Left ventricle myocardium inferior (tissue), 1 donor: ENCODE measurements at regions of chr1 and their contacts with region 1.

Region 1: GRCh38 chr1:205485338-205486228 is 18.9 kb upstream of the CDK18 start:
- DNase-seq: no peak
- H3K4me3 ChIP-seq: no peak overlapping the region
- H3K27ac ChIP-seq: no peak overlapping the region
- H3K4me1 ChIP-seq: peaks cover 5% of the 10 kb centered on the region
- H3K27me3 ChIP-seq: peaks cover 50% of the 10 kb centered on the region
- CTCF ChIP-seq: peak; percentile 99

Region 2: DNA sequence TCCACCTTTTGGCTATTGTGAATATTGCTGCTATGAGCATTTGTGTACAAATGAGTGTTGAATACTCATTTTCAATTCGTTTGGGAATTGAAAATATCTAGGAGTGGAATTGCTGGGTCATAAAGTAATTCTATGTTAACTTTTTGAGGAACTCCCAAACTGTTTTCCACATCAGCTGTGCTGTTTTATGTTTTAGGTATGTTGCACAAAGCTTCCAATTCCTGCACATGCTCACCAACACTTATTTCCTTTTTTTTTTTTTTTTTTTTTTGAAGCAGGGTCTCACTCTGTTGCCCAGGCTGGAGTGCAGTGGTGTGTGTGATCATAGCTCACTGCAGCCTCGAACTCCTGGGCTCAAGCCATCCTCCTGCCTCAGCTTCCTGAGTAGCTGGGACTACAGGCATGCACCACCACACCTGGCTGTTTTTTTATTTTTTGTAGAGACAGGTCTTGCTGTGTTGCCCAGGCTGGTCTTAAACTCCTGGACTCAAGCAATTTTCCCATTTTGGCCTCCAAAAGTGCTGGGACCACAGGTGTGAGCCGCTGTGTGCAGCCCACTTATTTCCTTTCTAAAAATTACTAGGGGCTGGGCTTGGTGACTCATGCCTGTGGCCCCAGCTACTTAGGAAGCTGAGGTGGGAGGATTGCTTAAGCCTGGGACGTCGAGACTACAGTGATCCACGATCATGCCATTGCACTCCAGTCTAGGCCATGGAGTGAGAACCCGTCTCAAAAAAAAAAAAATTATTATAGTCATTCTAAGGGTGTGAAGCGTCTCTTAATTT is 224.4 kb before region 1 on chr1:
- intact Hi-C with region 1: no loop called
- DNase-seq: no peak
- H3K4me3 ChIP-seq: no peak overlapping the region
- H3K27ac ChIP-seq: no peak overlapping the region
- H3K4me1 ChIP-seq: peaks cover 69% of the 10 kb centered on the region
- H3K27me3 ChIP-seq: peaks cover 8% of the 10 kb centered on the region
- CTCF ChIP-seq: no peak

Region 3: GRCh38 chr1:205382561-205382960 is 103.0 kb before region 1 on chr1:
- intact Hi-C with region 1: no loop called
- DNase-seq: no peak
- H3K4me3 ChIP-seq: no peak overlapping the region
- H3K27ac ChIP-seq: no peak overlapping the region
- H3K4me1 ChIP-seq: no peaks in the 10 kb centered on the region
- H3K27me3 ChIP-seq: peaks cover 67% of the 10 kb centered on the region
- CTCF ChIP-seq: no peak

Region 4: DNA sequence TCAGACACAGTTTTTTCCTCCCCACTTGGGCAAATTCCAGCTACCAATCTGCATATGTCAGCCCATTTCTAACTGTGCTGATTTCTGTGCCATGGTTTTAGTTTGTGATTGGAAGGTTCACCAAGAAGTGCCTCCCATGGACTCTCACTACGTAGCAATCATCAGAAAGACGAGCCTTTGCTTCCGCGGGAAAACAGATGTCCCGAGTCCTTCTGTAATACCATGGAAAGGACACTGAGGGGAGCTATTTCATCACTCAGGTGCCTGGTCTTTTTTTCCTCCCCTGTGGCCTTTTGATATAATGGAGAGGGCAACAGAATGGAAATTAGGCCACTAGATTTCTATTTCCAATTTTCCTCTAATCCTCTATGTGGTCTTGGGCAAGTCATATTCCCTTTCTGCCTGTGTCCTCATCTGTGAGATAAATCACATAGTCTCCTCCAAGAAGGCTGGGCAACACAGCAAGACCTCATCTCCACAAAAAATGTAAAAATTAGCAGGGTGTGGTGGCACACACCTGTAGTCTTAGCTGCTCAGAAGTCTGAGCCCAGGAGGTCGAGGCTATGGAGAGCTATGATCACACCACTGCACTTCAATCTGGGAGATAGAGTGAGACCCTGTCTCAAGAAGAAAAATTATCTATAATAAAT is 88.5 kb before region 1 on chr1:
- intact Hi-C with region 1: loop called (anchors 1 kb)
- DNase-seq: no peak
- H3K4me3 ChIP-seq: no peak overlapping the region
- H3K27ac ChIP-seq: no peak overlapping the region
- H3K4me1 ChIP-seq: no peaks in the 10 kb centered on the region
- H3K27me3 ChIP-seq: peaks cover 29% of the 10 kb centered on the region
- CTCF ChIP-seq: peak; percentile 87

Region 5: DNA sequence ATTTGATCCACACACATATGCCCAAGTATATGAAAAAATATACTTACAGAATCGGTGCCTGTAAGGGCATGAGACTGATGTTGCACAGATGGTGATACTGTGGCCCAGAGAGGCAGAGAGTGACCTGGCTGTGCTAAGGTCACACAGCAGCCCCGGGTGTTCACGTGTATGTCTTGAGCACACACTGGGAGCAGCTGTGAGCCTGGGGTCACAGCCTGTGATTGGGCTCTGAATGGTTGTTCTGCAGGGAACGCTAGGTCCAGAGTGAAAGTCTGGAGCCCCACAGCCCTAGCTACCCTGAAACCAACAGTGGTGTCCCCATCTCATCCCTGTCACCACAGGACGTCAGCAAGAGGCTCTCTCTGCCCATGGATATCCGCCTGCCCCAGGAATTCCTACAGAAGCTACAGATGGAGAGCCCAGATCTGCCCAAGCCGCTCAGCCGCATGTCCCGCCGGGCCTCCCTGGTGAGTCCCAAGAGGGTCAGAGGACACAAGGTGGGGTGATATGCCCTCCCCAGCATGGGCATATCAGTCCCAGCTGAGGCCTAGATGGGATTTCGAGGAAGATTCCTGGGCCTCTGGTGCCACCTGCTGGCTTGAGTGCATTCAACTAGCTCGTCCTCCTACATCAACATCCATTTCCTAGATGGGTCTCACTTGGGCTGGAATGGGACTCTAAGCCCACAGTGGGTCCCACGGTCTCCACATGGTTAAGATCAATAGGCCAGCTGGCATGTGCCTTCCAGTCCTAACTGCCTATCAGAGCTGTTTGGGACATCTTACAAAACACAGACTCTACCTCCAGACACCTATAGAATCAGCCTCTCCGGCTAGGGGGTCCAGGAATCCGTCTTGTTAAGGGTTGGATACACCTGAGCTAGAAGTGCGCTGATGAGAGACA is 38.6 kb after region 1 on chr1:
- intact Hi-C with region 1: loop called (anchors 1 kb)
- DNase-seq: peak; percentile 76
- H3K4me3 ChIP-seq: no peak overlapping the region
- H3K27ac ChIP-seq: peak overlapping the region; percentile 68
- H3K4me1 ChIP-seq: peaks cover 87% of the 10 kb centered on the region
- H3K27me3 ChIP-seq: no peaks in the 10 kb centered on the region
- CTCF ChIP-seq: peak; percentile 84

Region 6: GRCh38 chr1:205578780-205579606 is 93.4 kb after region 1 on chr1:
- intact Hi-C with region 1: no loop called
- DNase-seq: no peak
- H3K4me3 ChIP-seq: no peak overlapping the region
- H3K27ac ChIP-seq: no peak overlapping the region
- H3K4me1 ChIP-seq: peaks cover 18% of the 10 kb centered on the region
- H3K27me3 ChIP-seq: peaks cover 48% of the 10 kb centered on the region
- CTCF ChIP-seq: no peak